ENCODE measurements at regions of chr1 and their contacts with region 1.

Region 1: DNA sequence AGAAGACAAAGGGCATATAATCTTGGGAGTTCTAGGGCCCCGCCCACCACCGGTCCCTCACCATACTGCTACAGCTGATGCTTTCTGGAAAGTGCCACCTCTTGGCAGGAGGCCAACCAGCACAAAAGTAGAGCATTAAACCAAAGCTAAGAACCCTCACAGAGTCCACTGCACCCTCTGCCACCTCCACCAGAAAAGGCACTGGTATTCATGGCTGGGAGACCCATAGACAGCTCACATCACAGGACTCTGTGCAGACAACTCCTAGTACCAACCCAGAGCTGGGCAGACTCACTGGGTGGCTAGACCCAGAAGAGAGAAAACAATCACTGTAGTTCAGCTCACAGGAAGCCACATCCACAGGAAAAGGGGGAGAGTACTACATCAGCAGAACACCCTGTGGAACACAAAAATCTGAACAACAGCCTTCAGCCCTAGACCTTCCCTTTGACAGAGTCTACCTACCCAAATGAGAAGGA is 10.8 kb downstream of the THEM4 start:
- DNase-seq: peak; percentile 41 to 70
- H3K4me3 ChIP-seq: peak overlapping the region; percentile 33; the same call in 1 of the 2 replicates
- H3K27ac ChIP-seq: peak overlapping the region; percentile 73
- H3K4me1 ChIP-seq: peaks cover 45% of the 10 kb centered on the region
- H3K27me3 ChIP-seq: no peaks in the 10 kb centered on the region
- CTCF ChIP-seq: no peak

Region 2: GRCh38 chr1:150829743-150830142 is 1068.8 kb before region 1 on chr1:
- CTCF ChIA-PET with region 1: no interaction called
- POLR2A ChIA-PET with region 1: interaction called, 14 read pairs
- intact Hi-C with region 1: no loop called
- DNase-seq: no peak
- H3K4me3 ChIP-seq: no peak overlapping the region
- H3K27ac ChIP-seq: no peak overlapping the region
- H3K4me1 ChIP-seq: no peaks in the 10 kb centered on the region
- H3K27me3 ChIP-seq: no peaks in the 10 kb centered on the region
- CTCF ChIP-seq: peak; percentile 46; the same call in 1 of the 2 replicates

Region 3: DNA sequence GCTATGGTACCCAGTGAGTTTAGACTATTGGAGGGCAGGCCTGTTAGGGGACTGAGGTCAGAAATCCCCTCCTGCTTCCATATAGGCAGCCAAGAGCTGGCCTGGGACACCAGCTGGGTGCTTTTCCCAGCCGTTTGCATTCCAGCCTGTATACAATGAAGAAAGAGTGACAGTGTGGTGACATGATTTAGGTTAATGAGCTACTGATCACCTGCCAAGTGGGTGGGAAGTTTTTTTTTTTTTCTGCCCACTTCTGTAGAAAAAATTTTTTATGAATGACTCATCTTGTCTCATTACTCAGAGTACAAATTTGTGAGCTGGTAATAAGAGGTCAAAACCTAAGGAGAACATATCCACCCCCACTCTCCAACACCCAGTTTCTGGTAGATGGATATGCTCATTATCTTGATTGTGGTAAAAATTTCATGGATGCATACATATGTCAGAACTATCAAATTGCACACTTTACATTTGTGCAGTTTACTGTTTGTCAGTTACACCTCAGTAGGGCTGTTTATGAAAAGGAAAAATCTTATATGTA is 403.7 kb before region 1 on chr1:
- CTCF ChIA-PET with region 1: no interaction called
- POLR2A ChIA-PET with region 1: no interaction called
- intact Hi-C with region 1: no loop called
- DNase-seq: peak; percentile 64 to 92
- H3K4me3 ChIP-seq: no peak overlapping the region
- H3K27ac ChIP-seq: peak overlapping the region; percentile 73
- H3K4me1 ChIP-seq: peaks cover 25% of the 10 kb centered on the region
- H3K27me3 ChIP-seq: no peaks in the 10 kb centered on the region
- CTCF ChIP-seq: no peak

Region 4: DNA sequence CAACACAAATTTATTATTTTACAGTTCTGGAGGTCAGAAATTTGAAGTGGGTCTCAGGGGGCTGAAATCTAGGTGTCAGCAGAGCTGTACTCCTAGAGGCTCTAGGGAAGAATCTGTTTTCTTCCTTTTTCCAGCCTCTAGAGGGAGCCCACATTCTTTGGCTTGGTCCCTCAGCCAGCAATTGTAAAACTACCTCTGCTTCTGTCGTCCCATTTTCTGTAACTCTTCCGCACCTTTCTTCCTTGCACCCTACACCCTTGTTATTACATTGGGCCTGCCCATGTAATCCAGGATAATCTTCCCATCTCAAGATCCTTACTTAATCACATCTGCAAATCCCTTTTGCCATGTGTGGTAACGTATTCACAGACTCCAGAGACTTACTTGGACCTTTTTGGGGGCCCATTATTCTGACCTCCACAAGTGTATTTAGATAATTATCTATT is 35.5 kb after region 1 on chr1:
- CTCF ChIA-PET with region 1: no interaction called
- POLR2A ChIA-PET with region 1: no interaction called
- intact Hi-C with region 1: no loop called
- DNase-seq: peak; percentile 54 to 58
- H3K4me3 ChIP-seq: no peak overlapping the region
- H3K27ac ChIP-seq: no peak overlapping the region
- H3K4me1 ChIP-seq: peaks cover 12% of the 10 kb centered on the region; the same call in 1 of the 2 replicates
- H3K27me3 ChIP-seq: no peaks in the 10 kb centered on the region
- CTCF ChIP-seq: peak; percentile 89